ENCODE measurements at regions of chr6 and their contacts with region 1.

Region 1: GRCh38 chr6:32177788-32178546 is at the start of gene RNF5:
- DNase-seq: peak; percentile 91 to 99
- H3K4me3 ChIP-seq: peak within 1 kb of the TSS; percentile 98
- H3K27ac ChIP-seq: peak within 1 kb of the TSS; percentile 86
- H3K4me1 ChIP-seq: peaks cover 29% of the 10 kb centered on the region
- H3K27me3 ChIP-seq: no peaks in the 10 kb centered on the region
- CTCF ChIP-seq: no peak
- total RNA-seq, gene RNF5: 45.6 and 51.3 TPM in 2 replicates

Region 2: DNA sequence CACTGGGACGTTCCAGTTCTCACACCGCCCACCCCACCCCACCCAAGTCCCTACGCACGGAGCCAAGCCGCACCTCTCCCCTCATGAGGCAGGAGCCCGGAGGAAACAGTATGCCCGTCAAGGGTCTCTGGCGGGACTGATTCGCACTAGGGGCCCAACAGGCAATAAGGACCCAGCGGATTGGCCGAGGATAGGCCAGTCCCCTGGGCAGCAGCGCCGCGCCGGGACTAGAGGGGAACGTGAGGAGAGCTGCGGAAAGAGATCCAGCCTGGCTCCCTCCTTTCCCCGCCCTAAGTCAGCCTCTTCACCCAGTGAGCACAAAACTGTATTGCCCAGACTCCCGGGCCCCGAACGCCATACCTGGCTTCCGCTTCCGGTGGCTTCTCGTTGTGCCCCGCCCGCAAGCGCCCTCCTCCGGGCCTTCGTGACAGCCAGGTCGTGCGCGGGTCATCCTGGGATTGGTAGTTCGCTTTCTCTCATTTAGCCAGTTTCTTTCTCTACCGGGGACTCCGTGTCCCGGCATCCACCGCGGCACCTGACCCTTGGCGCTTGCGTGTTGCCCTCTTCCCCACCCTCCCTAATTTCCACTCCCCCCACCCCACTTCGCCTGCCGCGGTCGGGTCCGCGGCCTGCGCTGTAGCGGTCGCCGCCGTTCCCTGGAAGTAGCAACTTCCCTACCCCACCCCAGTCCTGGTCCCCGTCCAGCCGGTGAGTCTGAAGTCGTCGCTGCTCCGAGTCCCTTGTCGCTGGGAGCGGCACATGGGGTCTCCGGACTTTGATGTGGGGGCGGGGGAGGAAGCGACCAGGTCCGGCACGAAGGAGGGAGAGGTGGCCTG is 512.2 kb before region 1 on chr6 and contains the start of gene CSNK2B:
- CTCF ChIA-PET with region 1: no interaction called
- POLR2A ChIA-PET with region 1: no interaction called
- intact Hi-C with region 1: loop called (anchors 10 kb)
- DNase-seq: peak; percentile 95 to 96
- H3K4me3 ChIP-seq: peak within 1 kb of the TSS; percentile 90
- H3K27ac ChIP-seq: peak within 1 kb of the TSS; percentile 80
- H3K4me1 ChIP-seq: peaks cover 24% of the 10 kb centered on the region
- H3K27me3 ChIP-seq: no peaks in the 10 kb centered on the region
- CTCF ChIP-seq: no peak
- total RNA-seq, gene CSNK2B: 152 and 173 TPM in 2 replicates

Region 3: DNA sequence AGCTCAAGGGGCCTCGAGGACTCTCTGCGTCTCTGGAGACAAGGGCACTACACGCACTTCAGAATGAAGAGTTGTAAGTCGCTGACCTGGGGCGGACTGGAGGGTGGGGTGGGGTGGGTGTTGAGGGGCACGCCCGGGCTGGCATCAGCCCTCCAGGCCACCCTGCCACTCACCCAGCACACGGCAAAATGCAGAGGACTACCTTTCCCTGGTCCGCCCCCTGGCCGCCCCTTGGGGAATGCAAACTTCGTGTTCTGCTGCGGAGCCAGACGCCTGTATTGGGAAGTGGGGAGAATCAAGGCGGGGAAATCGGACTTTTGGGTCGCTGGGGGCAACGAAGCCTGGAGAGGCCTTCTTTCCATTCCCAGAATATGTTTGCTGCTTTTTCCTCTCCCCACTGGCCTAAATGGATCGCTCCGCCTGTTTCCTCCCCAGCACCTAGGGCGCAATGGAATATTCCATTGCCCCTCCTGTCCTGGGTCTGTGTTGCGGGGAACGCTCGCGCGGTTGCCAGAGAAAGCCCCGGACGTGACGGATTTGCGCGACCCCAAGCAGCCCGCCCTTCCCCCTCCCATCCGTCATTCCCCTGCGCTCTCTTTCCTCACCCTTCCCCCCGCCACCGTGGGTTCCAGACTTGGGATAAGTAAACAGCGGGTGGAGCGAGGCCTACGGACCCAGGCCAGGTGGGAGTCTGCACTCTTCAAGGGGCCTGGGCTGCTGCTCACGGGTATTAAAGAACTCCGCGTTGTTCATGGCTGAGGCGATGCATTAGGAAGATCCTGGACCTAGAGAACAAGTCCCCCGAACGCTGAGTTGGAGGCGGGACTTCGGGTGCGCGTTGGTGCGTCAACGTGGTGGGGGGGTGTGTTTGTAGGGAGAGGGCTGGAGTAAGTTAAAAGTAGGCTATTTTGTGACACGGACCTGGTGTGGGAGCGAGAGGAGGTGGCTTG is 24.1 kb before region 1 on chr6 and contains the start of gene PPT2:
- CTCF ChIA-PET with region 1: no interaction called
- POLR2A ChIA-PET with region 1: no interaction called
- intact Hi-C with region 1: loop called (anchors 2 kb)
- DNase-seq: peak; percentile 70 to 77
- H3K4me3 ChIP-seq: peak within 1 kb of the TSS; percentile 77
- H3K27ac ChIP-seq: peak within 1 kb of the TSS; percentile 96
- H3K4me1 ChIP-seq: peaks cover 18% of the 10 kb centered on the region
- H3K27me3 ChIP-seq: no peaks in the 10 kb centered on the region
- CTCF ChIP-seq: peak; percentile 45; the same call in 1 of the 2 replicates
- total RNA-seq, gene PPT2: 38.2 and 42.5 TPM in 2 replicates

Region 4: GRCh38 chr6:32190054-32190851 is 12.3 kb after region 1 on chr6 and contains the start of gene PBX2:
- CTCF ChIA-PET with region 1: interaction called, 4 read pairs
- POLR2A ChIA-PET with region 1: interaction called, 9 read pairs
- intact Hi-C with region 1: loop called (anchors 1 kb)
- DNase-seq: peak; percentile 56 to 74
- H3K4me3 ChIP-seq: peak within 1 kb of the TSS; percentile 85
- H3K27ac ChIP-seq: peak within 1 kb of the TSS; percentile 30
- H3K4me1 ChIP-seq: peaks cover 19% of the 10 kb centered on the region
- H3K27me3 ChIP-seq: no peaks in the 10 kb centered on the region
- CTCF ChIP-seq: no peak
- total RNA-seq, gene PBX2: 88.2 and 89.3 TPM in 2 replicates

Region 5: GRCh38 chr6:32195652-32195901 is 17.6 kb after region 1 on chr6:
- CTCF ChIA-PET with region 1: interaction called, 4 read pairs
- POLR2A ChIA-PET with region 1: interaction called, 9 read pairs
- intact Hi-C with region 1: loop called (anchors 1 kb)
- DNase-seq: peak; percentile 98 to 100
- H3K4me3 ChIP-seq: peak overlapping the region; percentile 96; the same call in 1 of the 2 replicates
- H3K27ac ChIP-seq: no peak overlapping the region
- H3K4me1 ChIP-seq: peaks cover 18% of the 10 kb centered on the region
- H3K27me3 ChIP-seq: peaks cover 4% of the 10 kb centered on the region
- CTCF ChIP-seq: no peak; the same call in none of the 2 replicates